ENCODE measurements at regions of chr2 and their contacts with region 1.

Region 1: GRCh38 chr2:98385050-98385699 is 38.9 kb downstream of the CNGA3 start:
- DNase-seq: peak; percentile 76 to 82 (median 79)
- ATAC-seq: peak; percentile 94 to 100 (median 97)
- H3K4me3 ChIP-seq: no peak overlapping the region
- H3K27ac ChIP-seq: no peak overlapping the region
- H3K4me1 ChIP-seq: no peaks in the 10 kb centered on the region
- H3K27me3 ChIP-seq: no peaks in the 10 kb centered on the region
- CTCF ChIP-seq: peak; percentile 96 to 98 (median 96)
- POLR2A ChIP-seq: no peak

Region 2: DNA sequence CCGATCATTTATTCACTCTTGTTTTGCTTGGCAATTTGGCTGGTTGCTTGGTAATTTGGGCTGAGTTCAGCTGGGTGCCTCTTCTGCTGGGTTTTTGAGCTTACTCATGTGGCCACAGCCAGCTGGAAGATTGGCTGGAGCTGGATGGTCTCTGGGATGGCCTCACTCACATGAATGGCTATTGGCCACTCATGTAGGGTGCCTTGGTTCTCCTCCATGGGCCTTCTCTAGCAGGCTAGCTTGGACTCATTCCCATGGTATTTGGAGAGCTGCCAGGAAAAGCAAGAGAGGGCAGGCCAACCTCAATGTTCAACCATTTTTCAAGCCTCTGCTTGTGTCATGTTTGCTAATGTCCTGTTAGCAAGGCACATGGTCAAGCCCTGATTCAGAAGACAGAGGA is 654.9 kb before region 1 on chr2:
- intact Hi-C with region 1: loop called in 1 of 2 experiments (anchors 10 kb)
- DNase-seq: no peak
- ATAC-seq: no peak
- H3K4me3 ChIP-seq: no peak overlapping the region
- H3K27ac ChIP-seq: no peak overlapping the region
- H3K4me1 ChIP-seq: no peaks in the 10 kb centered on the region
- H3K27me3 ChIP-seq: no peaks in the 10 kb centered on the region
- CTCF ChIP-seq: no peak
- POLR2A ChIP-seq: no peak

Region 3: GRCh38 chr2:97806738-97807618 is 578.2 kb before region 1 on chr2:
- intact Hi-C with region 1: loop called in 1 of 2 experiments (anchors 10 kb)
- DNase-seq: peak; percentile 84 to 85 (median 84)
- ATAC-seq: peak; percentile 99 to 100 (median 100)
- H3K4me3 ChIP-seq: no peak overlapping the region
- H3K27ac ChIP-seq: no peak overlapping the region
- H3K4me1 ChIP-seq: no peaks in the 10 kb centered on the region
- H3K27me3 ChIP-seq: no peaks in the 10 kb centered on the region
- CTCF ChIP-seq: peak; percentile 85 to 95 (median 94)
- POLR2A ChIP-seq: no peak

Region 4: DNA sequence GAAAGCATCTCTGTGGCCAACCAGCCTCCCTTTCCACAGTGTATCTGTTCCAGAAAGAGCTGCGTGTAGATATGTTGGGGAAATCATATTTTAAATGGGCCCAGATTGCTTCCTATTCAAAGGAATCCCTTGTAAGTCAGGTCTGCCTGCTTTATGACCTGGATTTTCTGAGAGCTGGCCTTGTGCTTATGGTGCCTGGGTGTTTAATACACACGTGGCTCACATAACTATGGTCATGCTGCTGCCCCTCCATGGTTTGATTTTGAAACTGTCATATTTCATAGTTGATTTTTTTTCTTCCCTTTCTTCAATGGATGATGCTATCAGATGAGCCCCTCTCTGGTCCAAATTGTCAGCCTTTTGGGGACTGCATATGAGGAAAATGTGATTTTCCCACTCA is 150.4 kb before region 1 on chr2:
- intact Hi-C with region 1: no loop called
- DNase-seq: no peak
- ATAC-seq: no peak
- H3K4me3 ChIP-seq: no peak overlapping the region
- H3K27ac ChIP-seq: no peak overlapping the region
- H3K4me1 ChIP-seq: no peaks in the 10 kb centered on the region
- H3K27me3 ChIP-seq: no peaks in the 10 kb centered on the region
- CTCF ChIP-seq: no peak
- POLR2A ChIP-seq: no peak

Region 5: GRCh38 chr2:98280376-98281102 is 104.6 kb before region 1 on chr2:
- intact Hi-C with region 1: no loop called
- DNase-seq: peak in 1 of 3 donors; percentile 36
- ATAC-seq: peak; percentile 72 to 89 (median 78)
- H3K4me3 ChIP-seq: no peak overlapping the region
- H3K27ac ChIP-seq: no peak overlapping the region
- H3K4me1 ChIP-seq: no peaks in the 10 kb centered on the region
- H3K27me3 ChIP-seq: no peaks in the 10 kb centered on the region
- CTCF ChIP-seq: no peak
- POLR2A ChIP-seq: no peak

Measured in right lobe of liver (tissue), 6 donors.